PC-9 (cell line): ENCODE measurements at regions of chr13 and their contacts with region 1.

Region 1: GRCh38 chr13:52128714-52129700 is at the start of gene NEK5:
- DNase-seq: peak in 1 of 2 experiments; percentile 65
- H3K4me3 ChIP-seq: peak within 1 kb of the TSS; percentile 63
- H3K27ac ChIP-seq: no peak within 1 kb of the TSS
- H3K4me1 ChIP-seq: peaks cover 11% of the 10 kb centered on the region
- H3K27me3 ChIP-seq: no peaks in the 10 kb centered on the region; the same call in 1 of the 2 replicates
- CTCF ChIP-seq: peak; percentile 72
- total RNA-seq, gene NEK5: not detected in 2 replicates

Region 2: GRCh38 chr13:50130123-50130946 is 1998.7 kb before region 1 on chr13:
- CTCF ChIA-PET with region 1: no interaction called
- POLR2A ChIA-PET with region 1: no interaction called
- intact Hi-C with region 1: no loop called
- DNase-seq: peak in 1 of 2 experiments; percentile 30
- H3K4me3 ChIP-seq: peak overlapping the region; percentile 79
- H3K27ac ChIP-seq: no peak overlapping the region
- H3K4me1 ChIP-seq: peaks cover 16% of the 10 kb centered on the region
- H3K27me3 ChIP-seq: no peaks in the 10 kb centered on the region
- CTCF ChIP-seq: no peak

Region 3: GRCh38 chr13:51286135-51287002 is 842.6 kb before region 1 on chr13:
- CTCF ChIA-PET with region 1: interaction called, 10 read pairs
- POLR2A ChIA-PET with region 1: no interaction called
- intact Hi-C with region 1: no loop called
- DNase-seq: peak; percentile 39 to 70
- H3K4me3 ChIP-seq: no peak overlapping the region
- H3K27ac ChIP-seq: no peak overlapping the region
- H3K4me1 ChIP-seq: no peaks in the 10 kb centered on the region
- H3K27me3 ChIP-seq: peaks cover 50% of the 10 kb centered on the region
- CTCF ChIP-seq: peak; percentile 88

Region 4: GRCh38 chr13:51814825-51815650 is 314.0 kb before region 1 on chr13:
- CTCF ChIA-PET with region 1: interaction called, 3 read pairs
- POLR2A ChIA-PET with region 1: no interaction called
- intact Hi-C with region 1: loop called (anchors 1 kb)
- DNase-seq: peak; percentile 55 to 66
- H3K4me3 ChIP-seq: peak overlapping the region; percentile 7; the same call in 1 of the 2 replicates
- H3K27ac ChIP-seq: no peak overlapping the region
- H3K4me1 ChIP-seq: peaks cover 10% of the 10 kb centered on the region; the same call in 1 of the 2 replicates
- H3K27me3 ChIP-seq: peaks cover 36% of the 10 kb centered on the region; the same call in 1 of the 2 replicates
- CTCF ChIP-seq: peak; percentile 85

Region 5: DNA sequence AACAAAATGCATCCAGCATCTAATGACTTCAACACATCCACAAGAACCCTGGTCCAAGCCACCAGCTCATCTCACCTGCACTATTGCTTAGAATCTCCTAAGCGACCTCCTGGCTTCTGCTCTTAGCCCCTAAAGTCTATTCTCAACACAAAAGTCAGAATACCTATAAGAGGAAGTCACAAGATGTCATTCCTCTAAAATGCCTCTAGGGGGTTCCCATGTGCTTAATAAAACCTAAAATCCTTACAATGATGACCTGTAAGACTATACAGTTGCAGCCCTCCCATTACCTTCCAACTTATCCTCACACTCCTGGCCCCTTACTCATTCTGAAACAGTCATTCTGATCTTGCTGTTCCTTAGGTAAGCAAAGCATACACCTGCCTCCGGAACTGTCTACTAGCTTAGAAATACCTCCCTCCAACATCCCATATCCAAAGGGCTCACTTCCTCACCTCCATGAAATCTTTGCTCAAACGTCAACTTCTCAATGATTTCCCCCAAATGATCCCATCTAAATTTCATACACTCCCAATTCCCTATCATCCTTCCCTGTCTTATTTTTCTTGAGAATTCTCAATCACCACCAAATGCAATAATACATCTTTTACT is 127.8 kb before region 1 on chr13:
- CTCF ChIA-PET with region 1: no interaction called
- POLR2A ChIA-PET with region 1: no interaction called
- intact Hi-C with region 1: loop called (anchors 2 kb)
- DNase-seq: no peak
- H3K4me3 ChIP-seq: no peak overlapping the region
- H3K27ac ChIP-seq: no peak overlapping the region
- H3K4me1 ChIP-seq: peaks cover 20% of the 10 kb centered on the region
- H3K27me3 ChIP-seq: no peaks in the 10 kb centered on the region
- CTCF ChIP-seq: peak; percentile 80